ENCODE measurements at regions of chr9 and their contacts with region 1.

Region 1: DNA sequence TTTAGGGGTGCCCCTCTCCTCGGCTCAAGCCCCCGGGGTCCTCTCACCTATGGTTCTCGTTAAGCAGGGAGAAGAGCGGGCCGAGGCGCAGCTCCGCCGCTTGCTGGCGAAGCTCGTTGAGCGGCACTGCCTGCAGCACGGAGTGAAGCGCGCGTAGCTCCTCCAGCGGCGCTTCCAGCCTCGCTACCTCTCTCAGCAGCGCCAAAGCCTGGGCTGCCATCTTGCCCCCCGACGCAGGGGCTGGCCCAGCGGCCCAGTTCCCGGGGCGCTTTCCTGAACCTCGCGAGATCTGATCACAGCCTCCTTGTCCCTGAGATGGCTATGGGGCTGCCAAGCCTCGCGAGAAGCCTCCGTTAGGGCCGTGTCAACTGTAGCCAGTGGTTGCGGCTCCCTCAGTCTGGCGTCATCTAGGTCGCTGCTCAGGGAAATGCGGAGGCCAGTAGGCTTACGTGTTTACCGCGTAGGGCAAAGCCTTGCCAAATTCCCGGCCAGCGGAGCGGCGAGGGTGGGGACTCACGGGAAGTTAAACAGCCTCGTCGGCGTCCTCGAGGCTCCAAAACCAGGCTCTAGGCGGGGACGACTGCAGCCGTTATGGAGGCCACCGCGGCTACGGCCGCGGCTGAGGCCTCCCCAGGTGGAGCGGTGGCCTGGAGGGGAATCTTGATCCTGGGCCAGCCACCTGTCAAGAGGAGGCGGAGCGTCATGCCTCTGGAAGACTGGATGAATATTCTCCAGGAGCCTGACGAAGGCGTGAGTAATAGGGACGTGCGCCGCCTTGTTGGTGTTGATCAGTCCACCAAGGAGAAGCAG is at the start of gene PSMD5:
- DNase-seq: peak; percentile 98 to 100
- H3K4me3 ChIP-seq: peak within 1 kb of the TSS; percentile 89
- H3K4me3 Mint-ChIP-seq: peak within 1 kb of the TSS; percentile 100
- H3K27ac Mint-ChIP-seq: peak within 1 kb of the TSS; percentile 100
- H3K4me1 ChIP-seq: peaks cover 21% of the 10 kb centered on the region
- H3K4me1 Mint-ChIP-seq: peaks cover 31% of the 10 kb centered on the region
- H3K27me3 ChIP-seq: no peaks in the 10 kb centered on the region
- H3K27me3 Mint-ChIP-seq: no peaks in the 10 kb centered on the region
- CTCF ChIP-seq: no peak
- total RNA-seq, gene PSMD5: 53.7 and 68.1 TPM in 2 replicates

Region 2: DNA sequence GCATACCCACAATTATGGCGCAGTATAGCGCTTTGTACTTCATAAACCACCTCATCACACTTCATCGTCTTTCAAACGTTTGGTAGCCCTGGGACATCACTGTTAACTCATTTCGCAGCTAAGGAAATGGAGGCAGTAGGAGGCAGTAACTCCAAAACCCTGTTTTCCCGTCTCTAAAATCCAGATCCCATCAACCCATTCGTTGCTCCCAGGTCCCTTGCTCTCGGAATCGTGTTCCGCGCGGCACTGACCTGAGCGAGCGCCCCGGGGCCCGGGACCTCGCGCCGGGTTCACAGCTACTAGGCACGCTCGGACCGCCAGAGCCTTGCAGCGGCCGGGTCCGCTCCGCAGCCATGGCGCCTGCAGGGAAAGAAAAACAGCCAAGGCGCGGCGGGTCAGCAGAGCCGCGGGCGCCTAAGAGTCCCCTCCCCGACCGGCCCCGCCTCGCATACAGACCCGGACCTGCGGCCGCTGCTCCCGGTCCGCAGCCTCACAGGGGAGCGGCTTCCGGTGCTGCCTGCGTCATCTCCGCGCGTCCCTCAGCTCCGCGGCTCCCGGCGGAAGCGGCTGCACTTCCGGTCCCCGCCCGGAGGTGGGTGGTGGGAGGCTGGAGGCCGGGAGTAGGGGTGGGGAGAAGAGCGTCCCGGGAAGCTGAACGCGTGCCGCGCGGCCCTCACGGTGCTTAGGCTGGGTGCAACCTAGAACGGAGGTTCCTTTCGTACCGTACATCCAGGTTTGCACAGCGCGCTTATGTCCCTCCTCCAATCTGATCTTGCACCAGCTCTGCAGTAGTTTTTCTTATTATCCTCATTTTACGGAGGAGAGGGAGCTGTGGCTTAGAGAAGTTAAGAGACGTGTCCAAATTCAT is 49.8 kb before region 1 on chr9 and contains the start of gene FBXW2:
- CTCF ChIA-PET with region 1: no interaction called
- POLR2A ChIA-PET with region 1: interaction called, 4 read pairs
- intact Hi-C with region 1: loop called (anchors 1 kb)
- DNase-seq: peak; percentile 94
- H3K4me3 ChIP-seq: peak within 1 kb of the TSS; percentile 58
- H3K4me3 Mint-ChIP-seq: peak within 1 kb of the TSS; percentile 86
- H3K27ac Mint-ChIP-seq: peak within 1 kb of the TSS; percentile 90
- H3K4me1 ChIP-seq: peaks cover 10% of the 10 kb centered on the region
- H3K4me1 Mint-ChIP-seq: peaks cover 9% of the 10 kb centered on the region
- H3K27me3 ChIP-seq: no peaks in the 10 kb centered on the region
- H3K27me3 Mint-ChIP-seq: no peaks in the 10 kb centered on the region
- CTCF ChIP-seq: no peak
- total RNA-seq, gene FBXW2: 72.7 and 74.3 TPM in 2 replicates

Region 3: DNA sequence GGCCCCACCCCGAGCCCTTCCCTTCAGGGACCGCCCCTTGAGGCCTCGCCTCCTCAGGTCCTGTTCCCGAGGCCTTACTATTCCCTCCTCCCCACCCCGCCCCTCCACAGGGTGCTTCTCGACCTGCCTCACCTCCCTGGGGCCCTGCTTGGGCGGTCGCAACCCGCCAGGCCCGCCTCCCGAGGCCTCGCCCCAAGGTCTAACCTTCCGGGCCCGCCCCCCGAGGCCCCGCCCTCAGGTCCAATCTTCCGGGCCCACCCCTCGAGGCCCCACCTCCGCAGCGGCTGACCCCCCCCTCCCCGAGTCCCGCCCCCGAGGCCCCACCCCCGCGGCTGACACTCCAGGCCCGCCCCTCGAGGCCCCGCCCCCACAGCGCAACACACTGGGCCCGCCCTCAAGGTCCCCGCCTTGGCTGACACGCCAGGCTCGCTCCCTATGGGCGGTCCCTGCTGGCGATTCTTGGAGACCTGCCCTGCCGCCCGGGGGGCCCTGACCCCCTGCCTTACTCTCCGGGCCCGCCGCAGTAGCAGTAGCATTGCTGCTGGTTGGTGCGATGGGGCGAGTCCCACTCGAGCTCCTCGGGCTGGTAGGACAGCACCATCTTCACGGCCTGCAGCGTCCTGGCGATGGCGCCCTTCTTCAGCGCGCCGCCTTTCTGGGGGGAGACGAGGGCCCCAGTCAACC is 25.9 kb after region 1 on chr9:
- CTCF ChIA-PET with region 1: no interaction called
- POLR2A ChIA-PET with region 1: no interaction called
- intact Hi-C with region 1: loop called (anchors 1 kb)
- DNase-seq: peak; percentile 96 to 98
- H3K4me3 ChIP-seq: peak overlapping the region; percentile 39
- H3K4me3 Mint-ChIP-seq: peak overlapping the region; percentile 79
- H3K27ac Mint-ChIP-seq: peak overlapping the region; percentile 83
- H3K4me1 ChIP-seq: peaks cover 14% of the 10 kb centered on the region
- H3K4me1 Mint-ChIP-seq: peaks cover 16% of the 10 kb centered on the region
- H3K27me3 ChIP-seq: no peaks in the 10 kb centered on the region
- H3K27me3 Mint-ChIP-seq: no peaks in the 10 kb centered on the region
- CTCF ChIP-seq: peak in 1 of 2 experiments; percentile 1

Region 4: GRCh38 chr9:120928483-120929228 is 85.8 kb after region 1 on chr9:
- CTCF ChIA-PET with region 1: no interaction called
- POLR2A ChIA-PET with region 1: no interaction called
- intact Hi-C with region 1: loop called (anchors 2 kb)
- DNase-seq: peak; percentile 61 to 77
- H3K4me3 ChIP-seq: peak overlapping the region; percentile 64
- H3K4me3 Mint-ChIP-seq: peak overlapping the region; percentile 72
- H3K27ac Mint-ChIP-seq: peak overlapping the region; percentile 53
- H3K4me1 ChIP-seq: peaks cover 5% of the 10 kb centered on the region; the same call in 1 of the 2 replicates
- H3K4me1 Mint-ChIP-seq: peaks cover 7% of the 10 kb centered on the region
- H3K27me3 ChIP-seq: peaks cover 2% of the 10 kb centered on the region; the same call in 1 of the 2 replicates
- H3K27me3 Mint-ChIP-seq: no peaks in the 10 kb centered on the region
- CTCF ChIP-seq: no peak

Measured in Caco-2 (cell line).